Common myeloid progenitor, CD34-positive (primary cell): ENCODE measurements at regions of chr11 and their contacts with region 1.

Region 1: DNA sequence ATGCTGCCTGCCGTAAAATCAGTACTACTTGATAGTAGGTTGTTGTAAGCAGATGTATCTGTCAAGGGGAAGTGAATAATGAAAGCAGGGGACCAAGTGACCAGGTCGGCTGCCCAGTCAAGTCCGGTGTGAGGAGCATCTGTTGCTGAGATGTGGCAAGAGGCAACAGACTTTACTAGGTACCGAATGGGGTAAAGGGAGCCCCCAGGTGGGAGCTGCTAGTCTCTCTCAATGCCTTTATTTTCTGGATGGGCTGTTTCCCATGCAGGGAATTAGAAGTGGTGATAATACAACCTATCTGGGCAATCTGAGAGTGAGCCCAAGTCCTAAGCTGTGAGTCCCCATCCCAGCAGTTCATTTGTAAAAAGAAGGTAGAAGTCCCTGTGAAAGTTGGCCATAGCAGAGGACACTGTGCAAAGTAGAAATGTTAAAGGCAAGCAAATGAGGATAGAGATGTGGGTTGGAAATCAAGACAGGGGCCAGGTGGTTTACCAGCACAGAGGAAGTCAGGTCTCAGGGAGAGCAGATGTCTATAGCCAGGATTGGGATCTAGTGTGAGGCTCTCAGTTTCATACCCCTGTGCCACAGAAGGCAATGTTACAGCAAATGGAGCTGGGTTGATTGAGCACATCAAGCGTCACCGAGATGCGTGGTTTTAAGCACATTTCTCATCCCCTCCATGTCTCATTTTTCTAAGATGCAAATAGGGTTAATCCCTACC is 90.7 kb upstream of the RAG2 start:
- DNase-seq: no peak
- H3K4me3 ChIP-seq: no peak overlapping the region
- H3K27ac ChIP-seq: no peak overlapping the region
- H3K4me1 ChIP-seq: peaks cover 0 to 4% (median 0%) of the 10 kb centered on the region in 4 experiments
- H3K27me3 ChIP-seq: peaks cover 0 to 10% (median 7%) of the 10 kb centered on the region in 5 experiments

Region 2: DNA sequence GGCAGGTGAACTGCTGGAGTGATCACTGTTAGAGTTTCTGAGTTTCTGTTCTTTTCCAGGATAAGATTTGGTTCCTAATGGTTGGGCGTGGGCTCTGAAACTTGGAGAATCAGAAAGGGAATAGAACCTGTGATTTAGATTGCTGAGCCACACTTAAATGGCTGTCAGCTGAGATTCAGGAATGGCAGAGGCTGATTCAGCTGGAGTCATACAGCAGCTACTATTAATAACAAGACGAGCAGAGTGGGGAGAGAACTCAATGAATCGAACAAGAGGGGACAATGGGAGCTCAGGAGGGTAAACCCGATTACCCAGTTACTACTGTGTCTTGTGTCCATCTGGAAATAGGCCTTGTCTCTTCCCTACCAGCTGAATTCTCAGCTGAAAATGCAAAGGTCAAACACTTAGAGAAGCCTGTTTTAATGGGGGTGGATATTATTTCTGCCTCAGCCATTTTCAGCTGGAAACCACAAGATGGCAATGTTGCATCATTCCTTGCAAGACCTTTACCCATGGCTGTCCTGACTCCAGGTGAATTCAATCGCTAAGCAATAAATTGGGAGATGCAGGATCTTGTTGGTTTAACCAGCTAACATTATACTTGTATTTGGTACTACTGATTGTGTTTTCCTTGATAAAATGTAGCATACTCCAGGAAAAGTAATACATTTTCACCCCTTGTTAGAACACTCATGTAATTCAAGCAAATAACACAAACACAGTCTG is 13.8 kb after region 1 on chr11:
- CTCF ChIA-PET with region 1: interaction called, 11 read pairs
- POLR2A ChIA-PET with region 1: no interaction called
- DNase-seq: peak; percentile 72 to 74 (median 72)
- H3K4me3 ChIP-seq: no peak overlapping the region
- H3K27ac ChIP-seq: no peak overlapping the region
- H3K4me1 ChIP-seq: peaks cover 0 to 8% (median 0%) of the 10 kb centered on the region in 4 experiments
- H3K27me3 ChIP-seq: no peaks in the 10 kb centered on the region